Ascending aorta (tissue), 2 donors: ENCODE measurements at regions of chr1 and their contacts with region 1.

Region 1: DNA sequence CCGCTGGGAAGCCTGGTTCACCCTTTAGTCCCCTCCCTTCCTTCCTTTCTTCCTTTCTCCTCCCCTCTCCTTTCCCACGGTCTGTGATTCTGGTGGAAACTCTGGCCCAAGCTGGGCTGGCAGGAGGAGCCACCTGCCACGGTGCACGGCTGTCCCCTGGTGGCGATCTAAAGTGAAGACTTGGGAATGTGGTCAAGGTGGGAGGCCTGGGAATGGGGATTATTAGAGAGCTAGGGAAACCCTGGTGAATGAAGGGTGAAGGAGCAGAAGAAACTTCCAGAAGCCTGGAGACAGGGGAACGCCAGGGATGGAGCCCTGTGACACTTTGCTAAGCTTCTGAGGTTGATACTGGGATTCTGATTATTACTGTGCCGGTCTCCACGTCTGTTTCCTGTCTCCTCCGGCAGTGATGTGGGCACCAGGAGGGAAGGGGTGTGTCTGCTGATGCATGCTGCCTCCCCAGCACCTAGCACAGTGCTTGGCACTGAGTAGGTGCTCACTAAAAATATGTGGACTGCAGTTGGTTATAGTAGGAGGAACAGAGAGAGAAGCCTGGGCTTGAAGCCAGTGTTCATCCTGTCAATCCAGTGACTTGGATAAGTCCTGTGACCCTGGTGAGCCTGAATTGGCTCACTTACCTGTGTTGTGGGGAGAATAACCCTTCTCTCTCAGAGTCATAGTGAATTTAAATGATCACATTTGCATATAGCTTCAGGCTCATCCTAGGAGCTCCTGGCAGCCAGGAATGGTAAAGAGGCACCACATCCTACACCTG is 71.2 kb upstream of the NBPF3 start:
- DNase-seq: peak; percentile 14 to 87
- H3K4me3 ChIP-seq: peak overlapping the region in 1 of 2 donors; percentile 25
- H3K27ac ChIP-seq: no peak overlapping the region
- H3K4me1 ChIP-seq: no peaks in the 10 kb centered on the region
- H3K27me3 ChIP-seq: no peaks in the 10 kb centered on the region
- CTCF ChIP-seq: peak; percentile 99

Region 2: GRCh38 chr1:21216835-21217811 is 151.6 kb before region 1 on chr1:
- intact Hi-C with region 1: loop called (anchors 5 kb)
- DNase-seq: peak in 1 of 2 donors; percentile 73
- H3K4me3 ChIP-seq: no peak overlapping the region
- H3K27ac ChIP-seq: no peak overlapping the region
- H3K4me1 ChIP-seq: no peaks in the 10 kb centered on the region
- H3K27me3 ChIP-seq: no peaks in the 10 kb centered on the region
- CTCF ChIP-seq: peak; percentile 30 to 73 (median 73)

Region 3: GRCh38 chr1:21232044-21232443 is 136.7 kb before region 1 on chr1:
- intact Hi-C with region 1: loop called (anchors 1 kb)
- DNase-seq: no peak
- H3K4me3 ChIP-seq: no peak overlapping the region
- H3K27ac ChIP-seq: no peak overlapping the region
- H3K4me1 ChIP-seq: no peaks in the 10 kb centered on the region
- H3K27me3 ChIP-seq: no peaks in the 10 kb centered on the region
- CTCF ChIP-seq: peak; percentile 68 to 81 (median 71)

Region 4: DNA sequence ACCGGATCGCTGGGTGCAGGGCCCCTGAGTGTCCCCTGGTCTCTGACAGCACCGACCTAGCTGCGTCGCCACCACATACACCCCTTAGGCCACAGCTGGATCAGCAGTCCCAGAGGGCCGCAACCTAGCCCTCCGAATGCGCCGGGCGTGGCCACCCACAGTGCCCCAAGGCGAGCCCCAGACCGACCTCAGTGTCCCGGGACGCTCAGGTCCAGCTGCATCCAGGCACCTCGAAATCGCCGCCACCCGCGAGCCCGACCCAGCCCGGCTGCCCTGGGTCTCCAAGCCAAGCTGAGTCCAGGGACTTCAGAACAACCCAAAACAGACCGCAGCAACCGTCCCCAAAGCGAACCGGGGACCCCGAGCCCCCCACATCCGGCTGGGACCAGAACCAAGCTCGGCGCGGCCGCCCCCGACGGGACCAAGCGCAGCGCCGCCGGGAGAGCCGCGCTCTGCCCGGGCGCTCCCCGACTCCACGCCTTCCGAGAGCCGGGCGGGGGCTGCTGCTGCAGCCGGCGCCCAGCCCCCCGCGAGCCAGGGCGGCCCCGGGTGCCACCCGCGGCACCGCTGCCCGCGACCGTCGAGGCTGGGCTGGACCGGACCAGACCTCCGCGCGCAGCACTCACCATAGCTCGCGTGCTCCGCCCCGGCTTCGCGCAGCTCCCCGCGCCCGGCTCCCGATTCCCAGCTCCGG is 23.8 kb before region 1 on chr1:
- intact Hi-C with region 1: loop called (anchors 1 kb)
- DNase-seq: no peak
- H3K4me3 ChIP-seq: peak overlapping the region; percentile 90 to 93
- H3K27ac ChIP-seq: peak overlapping the region; percentile 95 to 97
- H3K4me1 ChIP-seq: peaks cover 17 to 27% of the 10 kb centered on the region in 2 donors
- H3K27me3 ChIP-seq: no peaks in the 10 kb centered on the region
- CTCF ChIP-seq: no peak